Sigmoid colon (tissue), 7 donors: ENCODE measurements at regions of chrX and their contacts with region 1.

Region 1: DNA sequence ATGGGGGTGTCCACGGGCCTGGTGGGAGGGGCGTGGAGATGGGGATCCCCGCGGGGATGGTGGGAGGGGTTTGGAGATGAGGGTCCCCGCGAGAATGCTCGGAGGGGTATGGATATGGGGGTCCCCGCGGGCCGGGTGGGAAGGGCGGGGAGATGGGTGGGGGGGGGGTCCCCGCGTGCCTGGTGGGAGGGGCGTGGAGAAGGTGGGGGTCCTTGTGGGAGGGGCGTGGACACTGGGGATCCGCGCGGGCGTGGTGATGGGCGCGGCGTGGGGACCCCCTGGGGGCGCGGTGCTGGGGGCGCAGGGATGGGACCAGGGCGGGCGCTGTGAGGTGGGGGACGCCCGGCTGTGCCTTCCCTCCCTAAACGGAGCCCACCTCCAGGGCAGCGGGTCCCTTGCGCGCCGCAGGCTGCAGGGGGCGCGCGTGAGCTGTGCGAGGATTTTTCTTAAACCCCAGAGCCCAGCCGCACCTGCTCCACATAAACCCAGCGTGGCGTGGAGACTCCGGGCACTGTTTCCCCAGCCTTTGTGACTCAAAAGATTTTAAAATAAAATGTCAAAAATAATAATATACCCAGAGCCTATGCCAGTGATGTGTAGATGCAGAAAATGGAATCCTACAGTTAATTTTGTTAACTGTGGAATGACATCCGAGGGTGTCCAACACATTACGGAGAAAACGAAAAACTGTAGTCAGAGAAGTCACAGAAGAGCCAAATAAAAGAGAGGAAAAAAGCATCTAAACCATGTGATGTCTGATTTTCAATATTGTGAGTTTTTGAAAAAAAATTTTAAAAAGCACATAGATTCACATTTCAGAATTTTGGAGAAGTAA is 1.5 kb upstream of the ASMTL start:
- DNase-seq: peak; percentile 91
- H3K4me3 ChIP-seq: peak overlapping the region; percentile 38 to 86 (median 64)
- H3K27ac ChIP-seq: peak overlapping the region; percentile 91 to 97 (median 96)
- H3K4me1 ChIP-seq: peaks cover 0 to 33% (median 27%) of the 10 kb centered on the region in 4 donors
- H3K27me3 ChIP-seq: no peaks in the 10 kb centered on the region
- CTCF ChIP-seq: peak; percentile 84 to 98 (median 93)
- EP300 ChIP-seq: no peak
- POLR2A ChIP-seq: no peak

Region 2: GRCh38 chrX:295136-295535 is 1159.0 kb before region 1 on chrX:
- intact Hi-C with region 1: no loop called
- DNase-seq: peak; percentile 37
- H3K4me3 ChIP-seq: no peak overlapping the region
- H3K27ac ChIP-seq: no peak overlapping the region
- H3K4me1 ChIP-seq: no peaks in the 10 kb centered on the region
- H3K27me3 ChIP-seq: no peaks in the 10 kb centered on the region
- CTCF ChIP-seq: no peak
- EP300 ChIP-seq: no peak
- POLR2A ChIP-seq: no peak

Region 3: DNA sequence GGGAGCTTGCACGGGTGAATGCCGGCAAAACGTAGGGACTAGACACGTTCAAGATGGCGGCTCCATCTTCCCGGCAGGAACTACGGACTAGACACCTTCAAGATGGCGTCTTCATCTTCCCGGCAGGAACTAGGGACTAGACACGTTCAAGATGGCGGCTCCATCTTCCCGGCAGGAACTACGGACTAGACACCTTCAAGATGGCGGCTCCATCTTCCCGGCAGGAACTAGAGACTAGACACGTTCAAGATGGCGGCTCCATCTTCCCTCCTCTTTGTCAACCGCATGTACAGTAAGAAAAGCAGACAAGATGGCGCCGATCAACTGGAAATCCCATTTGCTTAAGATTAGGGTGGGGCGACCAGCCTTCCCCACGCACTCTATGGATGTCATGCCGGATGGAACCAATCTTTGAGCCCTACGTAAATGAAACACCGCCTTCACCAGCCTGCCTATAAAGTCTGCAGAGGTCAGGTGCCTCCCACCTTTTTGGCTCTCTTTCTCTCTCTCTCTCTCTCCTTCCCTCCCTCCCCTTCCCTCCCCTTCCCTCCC is 464.1 kb before region 1 on chrX:
- intact Hi-C with region 1: loop called (anchors 5 kb)
- DNase-seq: peak; percentile 96
- H3K4me3 ChIP-seq: peak overlapping the region in 2 of 4 donors; percentile 22 to 43
- H3K27ac ChIP-seq: peak overlapping the region in 2 of 4 donors; percentile 64 to 65
- H3K4me1 ChIP-seq: no peaks in the 10 kb centered on the region
- H3K27me3 ChIP-seq: no peaks in the 10 kb centered on the region
- CTCF ChIP-seq: no peak
- EP300 ChIP-seq: no peak
- POLR2A ChIP-seq: no peak

Region 4: GRCh38 chrX:1196436-1196835 is 257.7 kb before region 1 on chrX:
- intact Hi-C with region 1: no loop called
- DNase-seq: no peak
- H3K4me3 ChIP-seq: no peak overlapping the region
- H3K27ac ChIP-seq: no peak overlapping the region
- H3K4me1 ChIP-seq: no peaks in the 10 kb centered on the region
- H3K27me3 ChIP-seq: peaks cover 0 to 4% (median 0%) of the 10 kb centered on the region in 3 donors
- CTCF ChIP-seq: no peak
- EP300 ChIP-seq: no peak
- POLR2A ChIP-seq: no peak

Region 5: GRCh38 chrX:1591102-1591900 is 137.1 kb after region 1 on chrX and contains the start of gene AKAP17A:
- intact Hi-C with region 1: loop called (anchors 2 kb)
- DNase-seq: peak; percentile 98
- H3K4me3 ChIP-seq: peak within 1 kb of the TSS; percentile 79 to 99 (median 90)
- H3K27ac ChIP-seq: peak within 1 kb of the TSS; percentile 80 to 89 (median 85)
- H3K4me1 ChIP-seq: peaks cover 0 to 32% (median 23%) of the 10 kb centered on the region in 4 donors
- H3K27me3 ChIP-seq: no peaks in the 10 kb centered on the region
- CTCF ChIP-seq: no peak
- EP300 ChIP-seq: peak in 1 of 4 donors; percentile 40
- POLR2A ChIP-seq: no peak
- total RNA-seq, gene AKAP17A: 22.1 to 45.1 (median 26.4) TPM

Region 6: GRCh38 chrX:2500267-2501075 is 1046.3 kb after region 1 on chrX and contains the starts of genes DHRSX and ZBED1:
- intact Hi-C with region 1: loop called (anchors 5 kb)
- DNase-seq: no peak
- H3K4me3 ChIP-seq: peak within 1 kb of the TSS; percentile 59 to 94 (median 86)
- H3K27ac ChIP-seq: peak within 1 kb of the TSS; percentile 86 to 90 (median 90)
- H3K4me1 ChIP-seq: peaks cover 0 to 35% (median 31%) of the 10 kb centered on the region in 4 donors
- H3K27me3 ChIP-seq: no peaks in the 10 kb centered on the region
- CTCF ChIP-seq: no peak
- EP300 ChIP-seq: no peak
- POLR2A ChIP-seq: no peak
- total RNA-seq, gene DHRSX: 12.5 to 25.2 (median 15.1) TPM
- total RNA-seq, gene ZBED1: 25.8 to 35.6 (median 27.6) TPM

Region 7: DNA sequence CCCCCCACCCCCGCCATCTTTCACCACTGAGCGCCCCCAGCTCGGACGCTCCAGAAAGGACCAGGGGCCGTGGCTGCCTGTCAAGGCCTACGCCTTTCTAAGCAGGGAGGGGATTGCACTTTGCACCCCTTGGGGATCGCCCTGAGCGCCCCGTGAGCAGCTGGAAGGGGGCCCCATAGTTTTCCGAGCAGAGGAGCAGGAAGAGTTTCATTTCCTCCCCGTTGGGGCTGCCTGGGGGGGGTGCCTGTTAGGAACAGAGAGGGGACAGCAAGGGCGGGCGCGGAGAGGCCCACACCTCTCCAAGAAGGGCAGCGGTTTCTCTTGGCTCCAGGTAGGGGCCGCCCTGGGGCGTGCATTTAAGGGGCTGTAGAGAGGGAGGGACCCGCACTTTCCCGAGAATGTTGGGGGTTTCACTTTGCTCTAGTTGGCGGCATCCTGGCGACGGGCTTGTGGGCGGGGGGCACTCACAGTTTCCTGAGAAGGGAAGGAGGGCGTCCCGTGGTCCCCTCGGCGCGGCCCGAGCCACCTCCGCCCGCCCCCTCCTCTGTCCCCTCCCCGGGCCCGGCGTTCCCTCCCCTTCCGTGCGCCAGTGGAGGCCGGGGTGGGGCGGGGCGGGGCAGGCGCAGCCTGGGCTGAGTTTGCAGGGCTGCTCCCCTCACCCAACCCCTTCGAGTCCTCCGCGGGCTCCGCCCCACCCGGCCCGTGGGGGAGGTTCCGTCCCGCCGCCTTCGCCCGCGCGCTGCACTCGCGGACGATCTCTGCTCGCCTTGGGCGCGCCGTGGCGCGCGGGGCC is 1154.7 kb after region 1 on chrX:
- intact Hi-C with region 1: loop called (anchors 5 kb)
- DNase-seq: peak; percentile 91
- H3K4me3 ChIP-seq: peak overlapping the region; percentile 63 to 89 (median 76)
- H3K27ac ChIP-seq: peak overlapping the region; percentile 73 to 83 (median 76)
- H3K4me1 ChIP-seq: peaks cover 0 to 14% (median 11%) of the 10 kb centered on the region in 4 donors
- H3K27me3 ChIP-seq: no peaks in the 10 kb centered on the region
- CTCF ChIP-seq: no peak
- EP300 ChIP-seq: no peak
- POLR2A ChIP-seq: no peak

Region 8: DNA sequence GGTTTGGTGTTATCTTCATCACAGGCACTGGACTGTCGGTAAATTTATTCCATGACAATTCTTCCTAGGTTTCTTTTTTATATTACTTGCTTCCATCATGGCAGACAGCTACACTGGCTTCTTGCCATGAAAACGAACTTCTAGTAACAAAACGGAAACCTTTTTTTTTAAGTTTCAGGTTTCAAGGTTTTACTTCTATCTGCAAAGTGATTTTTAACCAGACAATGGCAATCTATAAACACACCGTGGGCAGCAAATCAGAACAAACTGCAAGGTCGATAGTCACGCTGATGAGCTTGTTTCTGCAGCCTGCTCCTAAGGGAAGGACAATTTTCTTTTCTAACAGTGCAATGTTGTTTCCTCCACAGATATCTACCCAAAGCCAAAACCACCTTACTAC is 1327.5 kb after region 1 on chrX:
- intact Hi-C with region 1: no loop called
- DNase-seq: no peak
- H3K4me3 ChIP-seq: no peak overlapping the region
- H3K27ac ChIP-seq: no peak overlapping the region
- H3K4me1 ChIP-seq: no peaks in the 10 kb centered on the region
- H3K27me3 ChIP-seq: no peaks in the 10 kb centered on the region
- CTCF ChIP-seq: no peak
- EP300 ChIP-seq: no peak
- POLR2A ChIP-seq: no peak